ENCODE measurements at regions of chr4 and their contacts with region 1.

Region 1: GRCh38 chr4:165784672-165785071 is 88.4 kb upstream of the TLL1 start:
- DNase-seq: peak in 4 of 5 donors; percentile 64 to 73 (median 68)
- ATAC-seq: peak; percentile 94 to 97 (median 95)
- H3K4me3 ChIP-seq: no peak overlapping the region
- H3K27ac ChIP-seq: peak overlapping the region in 7 of 12 donors; percentile 1 to 36 (median 27)
- H3K4me1 ChIP-seq: peaks cover 4 to 41% (median 15%) of the 10 kb centered on the region in 12 donors
- H3K27me3 ChIP-seq: no peaks in the 10 kb centered on the region
- CTCF ChIP-seq: no peak
- POLR2A ChIP-seq: no peak

Region 2: DNA sequence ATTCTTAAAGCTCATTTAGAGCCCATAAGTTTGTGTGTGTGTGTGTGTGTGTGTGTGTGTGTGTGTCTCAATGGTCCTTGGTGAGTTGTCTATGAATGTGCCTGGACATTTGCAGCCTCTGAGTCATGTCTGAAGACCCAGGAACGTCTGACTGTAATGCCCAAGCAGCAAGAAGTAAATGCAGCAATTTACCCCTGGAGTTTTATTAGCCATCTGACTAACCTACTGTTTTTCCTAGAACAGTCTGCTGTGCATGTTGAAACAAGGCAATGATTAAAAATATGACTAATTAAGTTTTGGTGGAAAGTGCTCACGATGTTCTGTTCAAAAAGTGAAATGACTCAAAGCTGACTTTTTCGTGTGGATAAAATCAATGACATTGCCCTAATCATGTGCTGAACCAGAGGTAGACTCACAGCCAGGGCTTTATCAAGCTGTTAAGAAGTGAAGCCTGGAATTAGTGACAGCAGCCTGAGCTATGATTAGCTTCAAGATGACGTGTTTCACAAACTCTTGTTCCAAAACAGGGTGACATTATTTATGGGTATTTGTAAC is 204.2 kb before region 1 on chr4:
- intact Hi-C with region 1: loop called in 2 of 10 experiments (anchors 2 to 10 kb)
- DNase-seq: peak in 3 of 5 donors; percentile 12 to 60 (median 21)
- ATAC-seq: peak; percentile 95 to 98 (median 96)
- H3K4me3 ChIP-seq: no peak overlapping the region
- H3K27ac ChIP-seq: peak overlapping the region; percentile 45 to 83 (median 66)
- H3K4me1 ChIP-seq: peaks cover 0 to 10% (median 0%) of the 10 kb centered on the region in 12 donors
- H3K27me3 ChIP-seq: no peaks in the 10 kb centered on the region
- CTCF ChIP-seq: no peak
- POLR2A ChIP-seq: no peak

Region 3: DNA sequence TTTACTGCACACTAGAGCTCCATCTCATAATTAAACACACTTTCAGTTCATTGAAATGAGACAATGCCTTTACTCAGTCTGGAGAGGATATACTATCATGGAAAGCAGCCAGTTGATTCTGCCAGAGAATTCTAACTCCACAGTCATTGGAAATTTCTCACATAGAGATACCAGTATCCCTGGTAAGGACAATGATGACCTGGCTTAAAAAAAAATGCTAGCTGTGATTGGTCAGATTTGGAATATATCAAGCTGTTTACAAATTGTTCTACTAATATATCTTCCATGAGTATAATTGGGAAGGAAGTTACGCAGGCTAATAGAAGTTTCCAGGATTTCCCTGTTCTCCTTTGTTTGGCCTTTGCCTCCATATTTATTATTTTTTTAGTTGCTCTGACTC is 53.9 kb after region 1 on chr4:
- intact Hi-C with region 1: loop called in 1 of 10 experiments (anchors 10 kb)
- DNase-seq: no peak
- ATAC-seq: peak; percentile 33 to 91 (median 57)
- H3K4me3 ChIP-seq: no peak overlapping the region
- H3K27ac ChIP-seq: peak overlapping the region in 4 of 12 donors; percentile 40 to 67 (median 46)
- H3K4me1 ChIP-seq: peaks cover 0 to 22% (median 0%) of the 10 kb centered on the region in 12 donors
- H3K27me3 ChIP-seq: no peaks in the 10 kb centered on the region
- CTCF ChIP-seq: no peak
- POLR2A ChIP-seq: no peak

Region 4: GRCh38 chr4:165855191-165855590 is 70.5 kb after region 1 on chr4:
- intact Hi-C with region 1: no loop called
- DNase-seq: no peak
- ATAC-seq: no peak
- H3K4me3 ChIP-seq: no peak overlapping the region
- H3K27ac ChIP-seq: no peak overlapping the region
- H3K4me1 ChIP-seq: no peaks in the 10 kb centered on the region
- H3K27me3 ChIP-seq: no peaks in the 10 kb centered on the region
- CTCF ChIP-seq: peak in 3 of 12 donors; percentile 17 to 21 (median 20)
- POLR2A ChIP-seq: no peak